Activated CD4-positive, alpha-beta T cell treated with anti-CD3 and anti-CD28 coated beads for 36 hours (primary cell): ENCODE measurements at regions of chr12 and their contacts with region 1.

Region 1: GRCh38 chr12:56224102-56224701 is at the start of gene NABP2:
- DNase-seq: peak; percentile 98
- ATAC-seq: peak; percentile 83
- H3K4me3 Mint-ChIP-seq: peak within 1 kb of the TSS; percentile 98
- H3K27ac Mint-ChIP-seq: peak within 1 kb of the TSS; percentile 88
- H3K4me1 Mint-ChIP-seq: peaks cover 37% of the 10 kb centered on the region
- H3K27me3 Mint-ChIP-seq: no peaks in the 10 kb centered on the region
- total RNA-seq, gene NABP2: 69.1 to 76.0 TPM

Region 2: GRCh38 chr12:55926738-55927587 is 297.2 kb before region 1 on chr12:
- CTCF ChIA-PET with region 1: no interaction called
- POLR2A ChIA-PET with region 1: no interaction called
- intact Hi-C with region 1: loop called in 1 of 2 experiments (anchors 5 kb)
- DNase-seq: peak; percentile 97
- ATAC-seq: peak; percentile 40
- H3K4me3 Mint-ChIP-seq: peak overlapping the region; percentile 100
- H3K27ac Mint-ChIP-seq: peak overlapping the region; percentile 95
- H3K4me1 Mint-ChIP-seq: peaks cover 48% of the 10 kb centered on the region
- H3K27me3 Mint-ChIP-seq: no peaks in the 10 kb centered on the region

Region 3: GRCh38 chr12:56127888-56128669 is 96.1 kb before region 1 on chr12 and contains the start of gene ESYT1:
- CTCF ChIA-PET with region 1: interaction called, 16 read pairs
- POLR2A ChIA-PET with region 1: interaction called, 11 read pairs
- intact Hi-C with region 1: loop called (anchors 1 kb)
- DNase-seq: peak; percentile 98
- ATAC-seq: peak; percentile 96
- H3K4me3 Mint-ChIP-seq: peak within 1 kb of the TSS; percentile 93
- H3K27ac Mint-ChIP-seq: peak within 1 kb of the TSS; percentile 95
- H3K4me1 Mint-ChIP-seq: peaks cover 55% of the 10 kb centered on the region
- H3K27me3 Mint-ChIP-seq: no peaks in the 10 kb centered on the region
- total RNA-seq, gene ESYT1: 132 to 160 TPM

Region 4: GRCh38 chr12:56206457-56207166 is 17.6 kb before region 1 on chr12:
- CTCF ChIA-PET with region 1: interaction called, 18 read pairs
- POLR2A ChIA-PET with region 1: interaction called, 3 read pairs
- intact Hi-C with region 1: no loop called
- DNase-seq: peak; percentile 69
- ATAC-seq: peak; percentile 84
- H3K4me3 Mint-ChIP-seq: no peak overlapping the region
- H3K27ac Mint-ChIP-seq: no peak overlapping the region
- H3K4me1 Mint-ChIP-seq: peaks cover 4% of the 10 kb centered on the region
- H3K27me3 Mint-ChIP-seq: no peaks in the 10 kb centered on the region

Region 5: GRCh38 chr12:56315622-56316473 is 91.6 kb after region 1 on chr12 and contains the start of gene CNPY2:
- CTCF ChIA-PET with region 1: interaction called, 5 read pairs
- POLR2A ChIA-PET with region 1: interaction called, 7 read pairs
- intact Hi-C with region 1: loop called in 1 of 2 experiments (anchors 1 kb)
- DNase-seq: peak; percentile 95
- ATAC-seq: peak; percentile 93
- H3K4me3 Mint-ChIP-seq: peak within 1 kb of the TSS; percentile 97
- H3K27ac Mint-ChIP-seq: peak within 1 kb of the TSS; percentile 95
- H3K4me1 Mint-ChIP-seq: peaks cover 18% of the 10 kb centered on the region
- H3K27me3 Mint-ChIP-seq: no peaks in the 10 kb centered on the region
- total RNA-seq, gene CNPY2: 77.4 to 82.6 TPM

Region 6: GRCh38 chr12:56510786-56511185 is 286.6 kb after region 1 on chr12:
- CTCF ChIA-PET with region 1: no interaction called
- POLR2A ChIA-PET with region 1: no interaction called
- intact Hi-C with region 1: no loop called
- DNase-seq: no peak
- ATAC-seq: no peak
- H3K4me3 Mint-ChIP-seq: no peak overlapping the region
- H3K27ac Mint-ChIP-seq: no peak overlapping the region
- H3K4me1 Mint-ChIP-seq: no peaks in the 10 kb centered on the region
- H3K27me3 Mint-ChIP-seq: peaks cover 3% of the 10 kb centered on the region

Region 7: DNA sequence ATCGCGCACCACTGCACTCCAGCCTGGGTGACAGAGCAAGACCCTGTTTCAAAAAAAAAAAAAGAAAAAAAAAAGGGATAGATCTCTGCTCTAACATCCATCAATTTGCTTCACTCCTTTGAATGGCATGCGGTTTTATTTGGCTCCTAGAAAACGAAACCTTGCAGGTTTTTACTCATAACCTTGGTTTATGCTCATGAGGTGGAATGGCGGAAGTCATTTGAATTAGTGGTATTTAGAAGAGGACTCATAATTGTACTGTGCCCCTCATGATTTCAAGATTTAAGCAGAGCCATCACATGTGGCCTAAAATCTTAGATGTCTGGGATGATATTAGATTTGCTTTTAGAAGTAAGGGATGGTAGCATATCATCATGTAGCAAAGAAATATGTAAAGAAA is 326.9 kb after region 1 on chr12:
- CTCF ChIA-PET with region 1: no interaction called
- POLR2A ChIA-PET with region 1: no interaction called
- intact Hi-C with region 1: no loop called
- DNase-seq: no peak
- ATAC-seq: no peak
- H3K4me3 Mint-ChIP-seq: no peak overlapping the region
- H3K27ac Mint-ChIP-seq: no peak overlapping the region
- H3K4me1 Mint-ChIP-seq: no peaks in the 10 kb centered on the region
- H3K27me3 Mint-ChIP-seq: no peaks in the 10 kb centered on the region

Region 8: GRCh38 chr12:56630160-56630632 is 406.0 kb after region 1 on chr12 and contains the start of gene BAZ2A:
- CTCF ChIA-PET with region 1: no interaction called
- POLR2A ChIA-PET with region 1: no interaction called
- intact Hi-C with region 1: loop called in 1 of 2 experiments (anchors 5 kb)
- DNase-seq: peak; percentile 94
- ATAC-seq: peak; percentile 69
- H3K4me3 Mint-ChIP-seq: peak within 1 kb of the TSS; percentile 96
- H3K27ac Mint-ChIP-seq: peak within 1 kb of the TSS; percentile 93
- H3K4me1 Mint-ChIP-seq: peaks cover 75% of the 10 kb centered on the region
- H3K27me3 Mint-ChIP-seq: no peaks in the 10 kb centered on the region
- total RNA-seq, gene BAZ2A: 79.4 to 129 TPM